Heart left ventricle (tissue), 16 donors: ENCODE measurements at regions of chr19 and their contacts with region 1.

Region 1: GRCh38 chr19:11505032-11505503 is 571 bp downstream of the ZNF653 start:
- DNase-seq: peak; percentile 97 to 99 (median 99)
- ATAC-seq: peak; percentile 93 to 97 (median 96)
- H3K4me3 ChIP-seq: peak overlapping the region; percentile 74 to 100 (median 93)
- H3K27ac ChIP-seq: peak overlapping the region; percentile 90 to 99 (median 96)
- H3K4me1 ChIP-seq: peaks cover 0 to 19% (median 6%) of the 10 kb centered on the region in 12 donors
- H3K27me3 ChIP-seq: no peaks in the 10 kb centered on the region
- CTCF ChIP-seq: no peak
- POLR2A ChIP-seq: no peak

Region 2: DNA sequence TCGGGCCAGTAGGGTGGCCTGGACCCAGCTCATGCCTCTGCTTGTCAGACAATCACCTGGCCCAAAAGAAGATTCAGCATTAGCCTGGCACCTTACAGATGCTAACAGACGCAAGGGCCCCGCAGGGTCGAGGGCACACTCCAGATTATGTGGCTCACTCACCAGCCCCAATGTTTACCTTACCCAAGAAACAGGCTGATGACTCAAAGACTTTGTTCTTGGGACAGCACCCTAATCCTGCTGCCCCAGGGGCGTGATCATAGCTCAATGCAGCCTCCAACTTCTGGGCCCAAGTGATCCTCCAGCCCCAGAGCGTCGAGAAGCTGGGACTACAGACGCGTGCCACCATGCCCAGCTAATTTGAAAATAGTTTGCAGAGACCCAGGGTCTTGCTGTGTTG is 14.1 kb after region 1 on chr19:
- intact Hi-C with region 1: loop called in 1 of 10 experiments (anchors 2 kb)
- DNase-seq: no peak
- ATAC-seq: no peak
- H3K4me3 ChIP-seq: no peak overlapping the region
- H3K27ac ChIP-seq: no peak overlapping the region
- H3K4me1 ChIP-seq: no peaks in the 10 kb centered on the region
- H3K27me3 ChIP-seq: no peaks in the 10 kb centered on the region
- CTCF ChIP-seq: no peak
- POLR2A ChIP-seq: no peak

Region 3: DNA sequence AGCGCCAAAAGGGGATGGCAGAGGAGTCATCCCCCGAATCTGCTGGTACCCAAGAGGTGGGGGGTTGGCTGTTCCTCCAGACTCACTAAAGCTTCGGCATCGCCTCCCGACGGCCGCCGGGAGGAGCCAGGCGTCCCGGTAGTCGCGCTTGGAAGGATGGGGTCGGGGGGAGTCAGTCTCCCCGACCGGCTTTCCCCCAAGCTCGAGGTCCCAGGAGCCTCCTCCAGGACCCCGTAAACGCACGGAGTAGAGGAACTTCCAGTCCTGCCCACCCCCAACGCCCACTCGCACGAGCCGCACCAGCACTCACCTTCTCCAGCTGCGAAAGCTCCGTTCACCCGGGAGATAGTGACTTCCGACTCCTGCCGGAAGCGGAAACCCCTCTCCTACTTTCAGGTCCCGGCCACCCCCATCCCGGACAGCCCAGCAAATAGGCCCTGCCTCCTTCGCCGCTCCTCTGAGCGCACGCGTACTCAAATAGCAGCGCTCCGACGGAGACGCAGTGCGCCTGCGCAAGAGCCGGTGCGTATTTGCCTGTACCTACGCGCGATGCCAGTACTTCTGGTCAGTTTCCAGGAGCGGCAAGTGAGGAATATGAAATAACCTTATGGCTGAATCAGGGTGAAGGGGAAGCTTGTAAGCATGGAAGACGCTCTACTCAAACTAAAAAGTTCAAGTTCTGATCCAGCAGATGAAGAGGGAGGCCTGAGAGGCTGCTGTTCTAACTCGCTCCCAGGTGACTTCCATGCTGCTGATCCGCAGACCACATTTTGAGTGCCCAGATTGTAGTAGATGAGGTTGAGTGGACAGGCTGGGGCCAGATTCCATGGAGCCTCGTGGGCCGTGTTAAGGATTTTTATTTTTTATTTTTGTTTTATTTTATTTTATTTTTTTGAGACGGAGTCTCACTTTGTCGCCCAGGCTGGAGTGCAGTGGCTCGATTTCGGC is 54.1 kb after region 1 on chr19 and contains the start of gene ELOF1:
- intact Hi-C with region 1: loop called in 1 of 10 experiments (anchors 2 kb)
- DNase-seq: peak; percentile 97 to 99 (median 99)
- ATAC-seq: peak; percentile 99
- H3K4me3 ChIP-seq: peak within 1 kb of the TSS; percentile 49 to 97 (median 87)
- H3K27ac ChIP-seq: peak within 1 kb of the TSS in 11 of 12 donors; percentile 70 to 88 (median 79)
- H3K4me1 ChIP-seq: peaks cover 0 to 39% (median 23%) of the 10 kb centered on the region in 12 donors
- H3K27me3 ChIP-seq: no peaks in the 10 kb centered on the region
- CTCF ChIP-seq: peak in 5 of 12 donors; percentile 1 to 42 (median 19)
- POLR2A ChIP-seq: peak in 1 of 2 donors; percentile 84
- total RNA-seq, gene ELOF1: 25.0 to 41.5 (median 27.7) TPM

Region 4: GRCh38 chr19:11597202-11598102 is 92.4 kb after region 1 on chr19 and contains the start of gene ZNF627:
- intact Hi-C with region 1: loop called in 1 of 10 experiments (anchors 10 kb)
- DNase-seq: peak; percentile 99 to 100 (median 99)
- ATAC-seq: peak; percentile 100
- H3K4me3 ChIP-seq: peak within 1 kb of the TSS; percentile 70 to 99 (median 88)
- H3K27ac ChIP-seq: peak within 1 kb of the TSS; percentile 44 to 95 (median 91)
- H3K4me1 ChIP-seq: peaks cover 0 to 19% (median 12%) of the 10 kb centered on the region in 12 donors
- H3K27me3 ChIP-seq: no peaks in the 10 kb centered on the region
- CTCF ChIP-seq: peak in 6 of 12 donors; percentile 5 to 47 (median 27)
- POLR2A ChIP-seq: peak; percentile 80 to 96
- total RNA-seq, gene ZNF627: 3.5 to 9.2 (median 6.0) TPM